ENCODE measurements at regions of chr22 and their contacts with region 1.

Region 1: DNA sequence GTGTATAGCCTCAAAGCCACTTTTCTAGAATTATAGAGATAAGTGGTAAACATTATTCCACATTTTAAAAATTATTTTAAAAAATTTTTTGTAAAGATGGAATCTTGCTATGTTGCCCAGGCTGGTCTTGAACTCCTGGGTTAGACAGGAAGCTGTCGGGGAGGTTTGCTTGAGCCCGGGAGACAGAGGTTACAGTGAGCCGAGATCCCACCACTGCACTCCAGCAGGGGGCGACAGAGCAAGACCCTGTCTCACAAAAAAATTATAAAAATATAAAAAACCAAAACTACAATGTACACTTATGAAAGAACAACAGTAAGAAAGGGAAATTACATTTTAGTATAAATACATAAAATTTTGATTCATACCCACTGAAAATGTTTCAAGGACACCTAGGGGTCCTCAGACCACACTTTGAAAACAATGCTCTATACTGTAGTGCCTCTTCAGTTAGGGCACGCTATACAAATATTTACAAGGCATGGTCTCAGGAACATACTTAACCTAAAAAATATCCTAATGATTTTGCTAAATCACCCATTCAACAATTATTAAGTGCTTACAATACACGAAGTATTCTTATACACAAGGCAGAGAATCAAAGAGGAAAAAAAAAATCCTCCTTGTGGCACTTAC is 111.2 kb downstream of the MRTFA start:
- DNase-seq: peak; percentile 68
- ATAC-seq: peak; percentile 63
- H3K4me3 ChIP-seq: no peak overlapping the region
- H3K4me3 Mint-ChIP-seq: no peak overlapping the region
- H3K27ac ChIP-seq: no peak overlapping the region
- H3K27ac Mint-ChIP-seq: no peak overlapping the region
- H3K4me1 ChIP-seq: peaks cover 7% of the 10 kb centered on the region in 2 donors
- H3K4me1 Mint-ChIP-seq: peaks cover 19% of the 10 kb centered on the region
- H3K27me3 ChIP-seq: no peaks in the 10 kb centered on the region
- H3K27me3 Mint-ChIP-seq: no peaks in the 10 kb centered on the region
- CTCF ChIP-seq: peak; percentile 89

Region 2: GRCh38 chr22:40651563-40652501 is 126.5 kb after region 1 on chr22:
- CTCF ChIA-PET with region 1: interaction called, 113 read pairs
- POLR2A ChIA-PET with region 1: interaction called, 4 read pairs
- intact Hi-C with region 1: no loop called
- DNase-seq: peak; percentile 61
- ATAC-seq: peak; percentile 85
- H3K4me3 ChIP-seq: peak overlapping the region in 4 of 5 experiments; percentile 48 to 59 (median 50)
- H3K4me3 Mint-ChIP-seq: peak overlapping the region; percentile 86
- H3K27ac ChIP-seq: peak overlapping the region; percentile 29 to 41
- H3K27ac Mint-ChIP-seq: peak overlapping the region; percentile 88
- H3K4me1 ChIP-seq: peaks cover 0 to 6% of the 10 kb centered on the region in 2 donors
- H3K4me1 Mint-ChIP-seq: peaks cover 14% of the 10 kb centered on the region
- H3K27me3 ChIP-seq: no peaks in the 10 kb centered on the region
- H3K27me3 Mint-ChIP-seq: no peaks in the 10 kb centered on the region
- CTCF ChIP-seq: no peak

Region 3: GRCh38 chr22:40764763-40765441 is 239.5 kb after region 1 on chr22:
- CTCF ChIA-PET with region 1: interaction called, 8 read pairs
- POLR2A ChIA-PET with region 1: no interaction called
- intact Hi-C with region 1: loop called (anchors 10 kb)
- DNase-seq: peak; percentile 77
- ATAC-seq: peak; percentile 94
- H3K4me3 ChIP-seq: peak overlapping the region in 4 of 5 experiments; percentile 23 to 42 (median 28)
- H3K4me3 Mint-ChIP-seq: peak overlapping the region; percentile 71
- H3K27ac ChIP-seq: peak overlapping the region; percentile 81 to 84
- H3K27ac Mint-ChIP-seq: peak overlapping the region; percentile 93
- H3K4me1 ChIP-seq: peaks cover 37 to 44% of the 10 kb centered on the region in 2 donors
- H3K4me1 Mint-ChIP-seq: peaks cover 43% of the 10 kb centered on the region
- H3K27me3 ChIP-seq: no peaks in the 10 kb centered on the region
- H3K27me3 Mint-ChIP-seq: no peaks in the 10 kb centered on the region
- CTCF ChIP-seq: no peak

Region 4: GRCh38 chr22:40898850-40899357 is 373.5 kb after region 1 on chr22:
- CTCF ChIA-PET with region 1: interaction called, 9 read pairs
- POLR2A ChIA-PET with region 1: no interaction called
- intact Hi-C with region 1: loop called (anchors 10 kb)
- DNase-seq: peak; percentile 65
- ATAC-seq: peak; percentile 57
- H3K4me3 ChIP-seq: no peak overlapping the region
- H3K4me3 Mint-ChIP-seq: no peak overlapping the region
- H3K27ac ChIP-seq: no peak overlapping the region
- H3K27ac Mint-ChIP-seq: no peak overlapping the region
- H3K4me1 ChIP-seq: no peaks in the 10 kb centered on the region
- H3K4me1 Mint-ChIP-seq: peaks cover 5% of the 10 kb centered on the region
- H3K27me3 ChIP-seq: no peaks in the 10 kb centered on the region
- H3K27me3 Mint-ChIP-seq: no peaks in the 10 kb centered on the region
- CTCF ChIP-seq: peak; percentile 63

Measured in B cell (primary cell).